Gastrocnemius medialis (tissue), 4 donors: ENCODE measurements at regions of chr11 and their contacts with region 1.

Region 1: GRCh38 chr11:128630367-128631230 is 43.2 kb upstream of the ETS1 start:
- DNase-seq: peak; percentile 62 to 71
- ATAC-seq: peak; percentile 90 to 94
- H3K4me3 ChIP-seq: no peak overlapping the region
- H3K27ac ChIP-seq: no peak overlapping the region
- H3K4me1 ChIP-seq: peaks cover 0 to 12% of the 10 kb centered on the region in 2 donors
- H3K27me3 ChIP-seq: no peaks in the 10 kb centered on the region
- CTCF ChIP-seq: peak; percentile 81 to 91 (median 87)
- POLR2A ChIP-seq: no peak

Region 2: DNA sequence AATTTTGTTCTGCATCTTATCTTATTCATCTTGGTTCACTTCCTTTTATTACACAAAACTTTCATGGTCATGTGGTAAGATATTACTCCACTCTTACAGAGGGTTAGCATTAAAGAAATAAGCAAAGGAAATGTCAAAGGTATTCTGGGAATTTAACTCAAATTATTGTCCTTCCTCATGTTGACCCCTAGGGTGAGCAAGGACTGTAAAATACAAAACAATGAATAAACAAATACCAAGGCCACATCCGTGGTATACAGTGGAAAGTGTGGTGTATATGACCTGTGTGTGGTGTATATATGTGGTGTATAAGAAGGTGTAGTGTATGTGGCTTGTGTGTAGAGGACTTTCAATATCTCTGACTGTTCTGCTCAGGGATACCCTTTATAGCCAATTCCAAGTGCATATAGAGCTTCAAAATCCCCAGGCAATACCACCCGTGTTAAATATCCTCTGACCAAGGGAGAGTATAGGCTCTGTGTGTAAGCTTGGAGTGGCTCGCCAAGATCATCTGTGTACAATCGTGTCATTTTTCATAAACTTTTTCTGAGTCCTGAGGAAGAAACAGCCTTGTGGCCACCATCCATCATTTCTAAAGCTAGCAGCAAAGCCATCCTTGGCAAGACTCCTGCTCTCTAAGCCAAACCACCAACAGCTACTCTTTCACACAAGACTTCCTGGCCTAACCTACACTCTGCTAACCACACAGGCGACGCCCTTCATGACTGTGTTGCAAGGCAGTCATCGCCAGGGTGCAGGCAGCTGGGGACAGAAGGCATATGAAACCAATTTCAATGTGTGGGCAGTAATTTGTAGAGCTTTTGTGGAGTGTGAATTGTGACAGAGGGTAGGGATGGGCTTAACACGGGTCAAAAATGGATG is 591.2 kb before region 1 on chr11:
- in situ Hi-C with region 1: loop called in 1 of 4 experiments (anchors 25 kb)
- intact Hi-C with region 1: no loop called
- DNase-seq: peak in 1 of 2 donors; percentile 51
- ATAC-seq: peak; percentile 58 to 70
- H3K4me3 ChIP-seq: no peak overlapping the region
- H3K27ac ChIP-seq: no peak overlapping the region
- H3K4me1 ChIP-seq: no peaks in the 10 kb centered on the region
- H3K27me3 ChIP-seq: no peaks in the 10 kb centered on the region
- CTCF ChIP-seq: peak in 1 of 5 experiments; percentile 14
- POLR2A ChIP-seq: no peak

Region 3: GRCh38 chr11:128164080-128164741 is 466.4 kb before region 1 on chr11:
- in situ Hi-C with region 1: loop called in 2 of 4 experiments (anchors 5 to 10 kb)
- intact Hi-C with region 1: no loop called
- DNase-seq: no peak
- ATAC-seq: no peak
- H3K4me3 ChIP-seq: no peak overlapping the region
- H3K27ac ChIP-seq: no peak overlapping the region
- H3K4me1 ChIP-seq: no peaks in the 10 kb centered on the region
- H3K27me3 ChIP-seq: no peaks in the 10 kb centered on the region
- CTCF ChIP-seq: no peak
- POLR2A ChIP-seq: no peak

Region 4: GRCh38 chr11:128172046-128172878 is 458.3 kb before region 1 on chr11:
- in situ Hi-C with region 1: loop called (anchors 5 to 10 kb)
- intact Hi-C with region 1: loop called (anchors 1 kb)
- DNase-seq: peak; percentile 31 to 55
- ATAC-seq: peak; percentile 60 to 65
- H3K4me3 ChIP-seq: no peak overlapping the region
- H3K27ac ChIP-seq: no peak overlapping the region
- H3K4me1 ChIP-seq: no peaks in the 10 kb centered on the region
- H3K27me3 ChIP-seq: no peaks in the 10 kb centered on the region
- CTCF ChIP-seq: peak; percentile 61 to 76 (median 65)
- POLR2A ChIP-seq: no peak

Region 5: DNA sequence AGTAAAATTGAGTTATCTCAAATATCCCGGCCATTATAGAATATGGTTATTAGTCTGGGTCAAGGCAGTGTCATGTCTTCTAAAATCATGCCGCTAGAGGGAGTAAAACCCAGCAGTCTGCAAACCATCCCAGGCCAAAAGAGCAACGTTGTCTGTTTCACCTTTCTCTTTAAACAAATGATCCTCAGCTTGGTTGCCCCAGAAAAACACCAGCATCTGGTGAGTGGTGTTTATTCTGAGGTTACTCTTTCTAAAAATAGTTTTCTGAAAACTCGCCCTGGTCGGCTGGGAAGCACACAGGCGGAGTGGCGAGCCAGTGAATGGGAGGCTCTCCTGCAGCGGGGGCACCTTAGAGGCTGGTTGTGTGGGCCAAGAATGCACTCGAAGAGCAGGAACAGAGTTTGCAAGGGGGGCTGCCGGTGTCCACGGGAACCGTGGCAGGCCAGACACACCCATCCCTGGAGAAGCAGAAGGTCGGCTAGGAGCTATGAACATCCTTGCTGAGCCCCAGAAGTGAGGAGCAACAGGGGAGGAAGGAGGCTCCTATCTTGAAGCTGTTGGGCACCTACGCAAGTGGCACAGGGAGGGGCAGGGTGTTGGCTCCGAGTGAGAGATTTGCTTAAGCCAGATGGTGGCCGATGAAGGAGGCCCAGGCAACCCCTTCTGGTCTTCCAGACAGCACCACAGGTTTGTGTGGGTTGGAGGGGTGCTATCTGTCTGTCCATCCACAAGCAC is 340.3 kb before region 1 on chr11:
- in situ Hi-C with region 1: loop called (anchors 5 kb)
- intact Hi-C with region 1: loop called (anchors 1 kb)
- DNase-seq: peak; percentile 35 to 47
- ATAC-seq: peak; percentile 96 to 97
- H3K4me3 ChIP-seq: peak overlapping the region; percentile 10 to 35 (median 20)
- H3K27ac ChIP-seq: peak overlapping the region; percentile 50 to 59 (median 53)
- H3K4me1 ChIP-seq: peaks cover 9% of the 10 kb centered on the region in 2 donors
- H3K27me3 ChIP-seq: no peaks in the 10 kb centered on the region
- CTCF ChIP-seq: peak; percentile 80 to 88 (median 85)
- POLR2A ChIP-seq: no peak

Region 6: GRCh38 chr11:128497061-128497775 is 133.4 kb before region 1 on chr11:
- in situ Hi-C with region 1: loop called in 1 of 4 experiments (anchors 25 kb)
- intact Hi-C with region 1: no loop called
- DNase-seq: peak; percentile 44 to 65
- ATAC-seq: peak; percentile 51 to 70
- H3K4me3 ChIP-seq: peak overlapping the region; percentile 19 to 46 (median 33)
- H3K27ac ChIP-seq: peak overlapping the region; percentile 78 to 88 (median 82)
- H3K4me1 ChIP-seq: peaks cover 88 to 95% of the 10 kb centered on the region in 2 donors
- H3K27me3 ChIP-seq: no peaks in the 10 kb centered on the region
- CTCF ChIP-seq: no peak
- POLR2A ChIP-seq: no peak